CD4-positive, alpha-beta memory T cell (primary cell): ENCODE measurements at regions of chr2 and their contacts with region 1.

Region 1: GRCh38 chr2:60881047-60881932 is at the start of gene REL:
- DNase-seq: peak; percentile 88 to 91 (median 89)
- H3K4me3 ChIP-seq: peak within 1 kb of the TSS; percentile 96 to 100
- H3K4me3 Mint-ChIP-seq: peak within 1 kb of the TSS; percentile 92 to 100 (median 96)
- H3K27ac ChIP-seq: peak within 1 kb of the TSS; percentile 100
- H3K27ac Mint-ChIP-seq: peak within 1 kb of the TSS; percentile 91 to 100 (median 99)
- H3K4me1 ChIP-seq: peaks cover 33% of the 10 kb centered on the region
- H3K4me1 Mint-ChIP-seq: peaks cover 14 to 41% (median 31%) of the 10 kb centered on the region in 4 donors
- H3K27me3 ChIP-seq: no peaks in the 10 kb centered on the region
- H3K27me3 Mint-ChIP-seq: no peaks in the 10 kb centered on the region
- total RNA-seq, gene REL: 26.5 to 28.0 TPM

Region 2: GRCh38 chr2:60756191-60757041 is 124.9 kb before region 1 on chr2 and contains the start of gene PAPOLG:
- CTCF ChIA-PET with region 1: no interaction called
- POLR2A ChIA-PET with region 1: interaction called, 12 read pairs
- intact Hi-C with region 1: loop called (anchors 1 kb)
- DNase-seq: peak; percentile 92 to 96 (median 93)
- H3K4me3 ChIP-seq: peak within 1 kb of the TSS; percentile 76 to 92
- H3K4me3 Mint-ChIP-seq: peak within 1 kb of the TSS; percentile 98 to 100 (median 100)
- H3K27ac ChIP-seq: peak within 1 kb of the TSS; percentile 89
- H3K27ac Mint-ChIP-seq: peak within 1 kb of the TSS; percentile 84 to 100 (median 99)
- H3K4me1 ChIP-seq: peaks cover 36% of the 10 kb centered on the region
- H3K4me1 Mint-ChIP-seq: peaks cover 28 to 51% (median 40%) of the 10 kb centered on the region in 4 donors
- H3K27me3 ChIP-seq: no peaks in the 10 kb centered on the region
- H3K27me3 Mint-ChIP-seq: no peaks in the 10 kb centered on the region
- total RNA-seq, gene PAPOLG: 40.1 to 40.3 TPM

Region 3: GRCh38 chr2:60818272-60818671 is 63.0 kb before region 1 on chr2:
- CTCF ChIA-PET with region 1: interaction called, 12 read pairs
- POLR2A ChIA-PET with region 1: interaction called, 57 read pairs
- intact Hi-C with region 1: loop called (anchors 1 kb)
- DNase-seq: peak in 1 of 5 donors; percentile 73
- H3K4me3 ChIP-seq: no peak overlapping the region
- H3K4me3 Mint-ChIP-seq: peak overlapping the region in 5 of 8 donors; percentile 11 to 78 (median 53)
- H3K27ac ChIP-seq: no peak overlapping the region
- H3K27ac Mint-ChIP-seq: peak overlapping the region; percentile 90 to 98 (median 97)
- H3K4me1 ChIP-seq: peaks cover 35% of the 10 kb centered on the region
- H3K4me1 Mint-ChIP-seq: peaks cover 25 to 56% (median 40%) of the 10 kb centered on the region in 4 donors
- H3K27me3 ChIP-seq: no peaks in the 10 kb centered on the region
- H3K27me3 Mint-ChIP-seq: peaks cover 0 to 5% of the 10 kb centered on the region in 2 donors

Region 4: DNA sequence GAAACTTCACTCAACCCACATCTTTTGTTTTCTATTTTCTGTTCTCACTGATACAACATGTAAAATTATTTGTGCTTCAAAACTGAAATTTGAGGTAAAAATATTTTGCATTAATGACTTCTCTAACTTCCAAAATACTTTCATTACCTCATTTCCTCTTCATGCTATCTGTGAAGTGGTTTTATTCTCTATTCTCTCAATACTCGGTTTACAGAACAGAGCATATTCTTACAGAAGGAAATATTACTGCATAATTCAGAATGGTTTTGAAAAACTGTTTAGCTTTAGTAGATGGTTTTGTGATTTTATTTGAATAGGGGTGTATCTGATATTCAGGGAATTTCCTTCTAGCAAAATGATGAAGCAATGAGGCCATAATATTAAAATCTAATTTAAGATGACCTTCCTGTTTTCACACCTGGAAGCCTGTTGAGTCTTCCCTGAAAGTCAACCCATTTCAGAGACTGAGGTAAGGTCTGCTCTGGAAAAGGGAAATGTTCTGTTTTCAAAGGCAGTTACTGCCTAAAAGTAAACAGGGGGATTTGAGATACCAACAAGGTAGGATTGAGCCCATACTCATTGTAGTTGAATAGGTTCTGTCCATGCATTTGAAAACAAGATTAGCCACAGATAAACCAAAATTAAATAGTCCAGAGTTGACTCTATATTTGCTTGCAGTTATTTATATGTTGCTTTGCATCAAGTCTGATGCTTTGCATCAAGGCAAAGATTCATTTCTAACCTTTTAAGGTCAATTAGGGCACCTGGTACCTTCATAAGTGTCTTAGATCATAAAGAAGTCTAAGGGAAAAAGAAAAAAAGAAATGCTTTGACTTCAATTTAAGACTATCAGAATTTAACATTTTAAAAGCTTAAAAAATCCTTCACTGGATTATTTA is 85.5 kb after region 1 on chr2:
- CTCF ChIA-PET with region 1: interaction called, 4 read pairs
- POLR2A ChIA-PET with region 1: interaction called, 18 read pairs
- intact Hi-C with region 1: no loop called
- DNase-seq: no peak
- H3K4me3 ChIP-seq: no peak overlapping the region
- H3K4me3 Mint-ChIP-seq: peak overlapping the region in 7 of 8 donors; percentile 43 to 83 (median 70)
- H3K27ac ChIP-seq: no peak overlapping the region
- H3K27ac Mint-ChIP-seq: peak overlapping the region; percentile 10 to 91 (median 89)
- H3K4me1 ChIP-seq: peaks cover 47% of the 10 kb centered on the region
- H3K4me1 Mint-ChIP-seq: peaks cover 28 to 44% (median 35%) of the 10 kb centered on the region in 4 donors
- H3K27me3 ChIP-seq: no peaks in the 10 kb centered on the region
- H3K27me3 Mint-ChIP-seq: no peaks in the 10 kb centered on the region

Region 5: DNA sequence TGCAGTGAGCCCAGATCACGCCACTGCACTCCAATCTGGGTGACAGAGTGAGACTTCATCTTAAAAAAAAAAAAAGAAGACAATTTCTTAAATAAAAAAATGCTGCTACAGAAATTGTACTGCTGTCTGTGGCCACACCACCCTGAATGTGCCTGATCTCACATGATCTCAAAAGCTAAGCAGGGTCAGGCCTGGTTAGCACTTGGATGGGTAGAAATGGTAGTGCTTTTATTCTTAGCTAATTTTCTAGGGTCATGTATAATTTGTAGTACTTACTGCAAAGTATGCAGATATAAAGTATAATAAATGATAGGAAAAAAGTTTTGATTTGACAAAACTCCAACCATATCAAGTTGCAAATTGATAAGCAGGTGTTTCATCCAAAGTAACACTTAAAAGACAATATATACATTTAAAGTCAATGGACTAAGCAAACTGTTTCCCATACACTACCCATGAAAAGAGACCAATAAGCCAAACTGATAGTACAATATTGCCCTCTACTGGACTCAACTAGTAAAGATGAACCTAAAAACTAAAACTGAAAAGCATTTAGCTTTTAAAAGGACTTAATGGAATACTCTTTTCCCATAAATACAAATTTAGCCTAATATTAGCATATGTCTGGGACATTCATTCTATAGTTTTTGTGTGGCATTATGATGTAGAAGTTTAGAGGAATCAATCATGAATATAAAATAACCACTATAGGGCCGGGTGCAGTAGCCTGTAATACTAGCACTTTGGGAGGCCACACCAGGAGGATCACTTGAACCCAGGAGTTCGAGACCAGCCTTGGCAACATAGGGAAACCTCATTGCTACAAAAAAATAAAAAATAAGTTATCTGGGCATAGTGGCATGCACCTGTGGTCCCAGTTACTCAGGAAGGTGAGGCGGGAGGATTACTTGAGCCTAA is 117.6 kb after region 1 on chr2:
- CTCF ChIA-PET with region 1: interaction called, 11 read pairs
- POLR2A ChIA-PET with region 1: interaction called, 10 read pairs
- intact Hi-C with region 1: loop called (anchors 5 kb)
- DNase-seq: peak in 4 of 5 donors; percentile 55 to 64 (median 59)
- H3K4me3 ChIP-seq: no peak overlapping the region
- H3K4me3 Mint-ChIP-seq: no peak overlapping the region
- H3K27ac ChIP-seq: no peak overlapping the region
- H3K27ac Mint-ChIP-seq: peak overlapping the region in 2 of 7 donors; percentile 4 to 36
- H3K4me1 ChIP-seq: no peaks in the 10 kb centered on the region
- H3K4me1 Mint-ChIP-seq: peaks cover 0 to 2% (median 0%) of the 10 kb centered on the region in 4 donors
- H3K27me3 ChIP-seq: no peaks in the 10 kb centered on the region
- H3K27me3 Mint-ChIP-seq: no peaks in the 10 kb centered on the region

Region 6: DNA sequence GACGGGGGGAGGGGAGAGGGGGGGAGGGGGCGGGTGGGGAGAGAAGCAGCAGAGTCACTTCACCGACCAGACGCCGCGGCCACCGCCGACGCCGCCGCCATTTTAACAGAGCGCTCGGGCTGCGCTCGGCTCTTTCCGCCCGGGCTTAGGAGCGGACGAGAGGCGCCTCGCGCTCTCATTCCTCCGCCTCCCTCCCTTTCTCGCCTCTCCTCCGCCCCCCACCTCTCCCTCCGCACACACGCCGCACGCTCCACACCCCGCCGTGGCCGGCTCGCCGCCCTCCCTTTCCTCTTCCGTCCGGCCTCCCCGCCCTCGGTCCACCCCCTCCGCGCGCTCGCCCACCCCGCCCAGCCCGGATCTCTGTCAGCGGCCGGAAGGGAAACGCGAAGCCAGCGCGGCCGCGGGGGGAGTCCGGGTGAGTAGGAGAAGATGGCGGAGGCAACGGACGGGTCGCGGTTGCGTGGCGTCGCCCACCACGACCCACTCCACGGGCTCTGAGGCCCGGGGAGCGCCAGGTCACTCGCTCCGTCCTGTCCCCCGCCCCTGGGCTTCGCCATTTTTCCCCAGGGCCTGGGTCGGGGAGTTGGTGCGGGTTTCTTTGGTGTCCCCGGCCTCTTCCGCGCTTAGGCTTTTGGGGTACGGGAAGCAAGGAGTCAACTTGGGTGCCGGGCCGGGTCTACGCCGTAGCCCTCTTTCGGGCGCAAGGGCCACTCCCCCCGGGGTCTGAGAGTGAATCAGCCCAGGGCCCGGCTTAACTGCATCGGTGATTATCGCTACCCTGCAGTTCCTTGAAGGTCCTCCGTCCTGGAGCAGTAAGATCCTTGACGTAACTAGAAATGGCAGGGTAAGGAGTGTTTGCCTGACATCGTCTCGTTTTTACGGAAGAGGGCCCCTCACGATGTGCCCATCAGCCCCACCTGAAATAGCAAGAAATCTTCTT is 589.9 kb after region 1 on chr2 and contains the start of gene USP34:
- CTCF ChIA-PET with region 1: no interaction called
- POLR2A ChIA-PET with region 1: no interaction called
- intact Hi-C with region 1: loop called (anchors 5 kb)
- DNase-seq: peak; percentile 89 to 95 (median 92)
- H3K4me3 ChIP-seq: peak within 1 kb of the TSS; percentile 68 to 89
- H3K4me3 Mint-ChIP-seq: peak within 1 kb of the TSS; percentile 92 to 98 (median 95)
- H3K27ac ChIP-seq: peak within 1 kb of the TSS; percentile 98
- H3K27ac Mint-ChIP-seq: peak within 1 kb of the TSS; percentile 93 to 100 (median 99)
- H3K4me1 ChIP-seq: peaks cover 41% of the 10 kb centered on the region
- H3K4me1 Mint-ChIP-seq: peaks cover 12 to 46% (median 29%) of the 10 kb centered on the region in 4 donors
- H3K27me3 ChIP-seq: no peaks in the 10 kb centered on the region
- H3K27me3 Mint-ChIP-seq: no peaks in the 10 kb centered on the region
- total RNA-seq, gene USP34: 163 to 164 TPM